HepG2 (cell line): ENCODE measurements at regions of chr22 and their contacts with region 1.

Region 1: DNA sequence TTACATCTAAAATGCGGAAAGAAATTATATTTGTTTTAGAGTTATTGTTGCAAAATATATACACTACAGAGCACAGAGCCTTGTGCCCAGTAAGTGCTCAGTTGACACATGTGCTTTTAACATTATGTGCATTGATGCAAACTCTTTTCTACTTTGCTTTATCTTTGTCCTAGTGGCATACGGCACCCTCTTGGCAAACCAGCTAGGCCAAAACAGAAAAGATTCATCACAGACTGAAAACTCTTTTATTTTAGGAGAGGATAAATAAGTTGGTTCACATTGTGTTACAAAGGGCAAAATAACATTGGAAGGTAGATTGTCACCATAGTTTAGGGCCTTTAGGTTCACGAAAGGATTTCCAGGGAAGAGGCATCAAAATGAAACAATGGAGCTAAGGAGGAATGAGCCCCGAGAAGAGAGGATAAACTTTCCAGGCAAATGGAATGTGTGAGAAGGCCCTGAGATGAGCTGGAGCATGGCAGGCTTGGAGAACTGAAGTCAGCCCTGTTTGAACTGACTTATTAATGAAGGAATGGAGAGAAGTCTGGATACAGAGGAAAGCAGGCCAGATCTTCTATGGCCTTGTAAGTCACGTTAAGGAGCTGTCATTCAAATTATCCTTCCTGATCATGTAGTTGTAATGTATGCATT is 23.5 kb upstream of the TOP3B start:
- DNase-seq: no peak
- ATAC-seq: no peak
- H3K4me3 ChIP-seq: no peak overlapping the region
- H3K27ac ChIP-seq: no peak overlapping the region
- H3K4me1 ChIP-seq: peaks cover 6% of the 10 kb centered on the region; the same call in 1 of the 2 replicates
- H3K27me3 ChIP-seq: peaks cover 0 to 14% of the 10 kb centered on the region in 2 experiments; a peak in 2 of 5 replicates
- CTCF ChIP-seq: no peak
- EP300 ChIP-seq: no peak
- POLR2A ChIP-seq: no peak
- RAD21 ChIP-seq: no peak

Region 2: DNA sequence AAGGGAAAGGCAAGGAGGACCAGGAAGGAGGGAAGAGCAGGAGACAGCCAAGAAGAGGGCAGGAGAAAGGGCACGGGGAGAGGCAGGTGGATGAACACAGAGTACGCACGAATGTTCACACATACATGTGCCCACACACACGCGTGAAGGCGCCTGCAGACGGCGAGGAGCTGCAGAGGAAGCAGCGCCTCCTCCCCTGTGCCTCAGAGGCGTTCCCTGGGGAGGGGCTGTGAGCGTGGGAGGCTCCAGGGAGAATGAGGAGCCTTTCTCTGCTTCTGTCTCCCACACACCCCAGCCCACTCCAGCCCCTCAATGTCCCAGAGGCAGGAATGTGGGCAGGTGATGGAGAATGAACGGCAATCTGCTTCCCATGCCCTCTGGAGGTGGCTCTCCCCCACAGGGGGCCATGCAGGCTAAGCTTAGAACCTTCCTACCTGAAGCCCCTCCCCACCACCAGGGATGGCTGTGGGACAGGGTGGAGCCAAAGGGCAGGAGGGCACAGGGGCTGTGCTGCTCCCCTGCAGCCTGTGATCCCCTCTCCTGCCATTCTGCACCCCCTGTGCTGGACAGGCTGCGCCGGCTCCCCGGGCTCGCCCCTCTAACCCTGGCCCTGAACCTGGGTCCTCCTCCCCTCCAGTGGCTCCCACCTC is 78.8 kb before region 1 on chr22:
- CTCF ChIA-PET with region 1: no interaction called
- POLR2A ChIA-PET with region 1: no interaction called
- in situ Hi-C with region 1: no loop called
- intact Hi-C with region 1: no loop called
- DNase-seq: no peak
- ATAC-seq: no peak
- H3K4me3 ChIP-seq: no peak overlapping the region
- H3K27ac ChIP-seq: no peak overlapping the region
- H3K4me1 ChIP-seq: no peaks in the 10 kb centered on the region
- H3K27me3 ChIP-seq: no peaks in the 10 kb centered on the region
- CTCF ChIP-seq: no peak
- EP300 ChIP-seq: no peak
- POLR2A ChIP-seq: no peak
- RAD21 ChIP-seq: no peak

Region 3: DNA sequence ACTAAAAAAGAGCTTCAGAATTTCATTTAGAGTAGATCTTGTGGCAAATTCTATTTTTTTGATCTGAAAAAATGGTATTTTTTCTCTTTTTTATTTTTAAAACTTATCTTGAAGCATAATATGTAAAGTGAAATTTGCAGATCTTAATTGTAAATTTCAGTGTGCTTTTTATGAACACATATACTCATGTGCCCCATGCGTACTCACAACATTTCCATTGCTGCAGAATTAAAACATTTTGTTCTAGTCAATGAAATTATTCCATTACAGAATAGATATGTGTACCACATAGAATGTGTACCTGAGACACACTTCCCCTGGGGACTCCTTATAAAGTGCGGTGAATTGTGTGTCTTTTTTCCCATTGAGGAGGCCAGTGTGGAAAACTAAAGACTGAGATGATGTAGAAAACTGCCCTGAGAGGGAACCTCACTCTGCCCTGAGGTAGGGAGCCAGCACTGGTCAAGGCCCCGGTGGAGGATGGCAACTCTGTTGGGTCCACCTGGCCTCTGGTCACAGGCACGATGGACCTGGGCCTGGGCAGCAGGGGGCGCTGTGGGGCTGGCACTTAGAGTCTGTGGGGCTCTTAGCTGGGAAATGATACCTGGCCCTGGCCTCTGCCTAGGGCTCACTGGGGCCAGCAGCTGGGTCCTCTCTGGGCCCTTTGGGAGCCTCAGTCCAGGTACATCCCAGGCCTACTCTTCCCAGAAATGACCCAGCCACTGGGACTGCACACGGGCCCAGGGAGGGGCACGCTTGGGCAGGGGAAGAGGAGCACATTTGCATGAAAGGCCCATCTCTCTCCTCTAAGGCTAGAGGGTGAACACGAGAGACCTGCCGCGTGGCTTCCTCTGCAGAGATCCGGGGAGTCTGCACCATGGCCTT is 54.4 kb after region 1 on chr22:
- CTCF ChIA-PET with region 1: no interaction called
- POLR2A ChIA-PET with region 1: no interaction called
- in situ Hi-C with region 1: no loop called
- intact Hi-C with region 1: loop called (anchors 2 kb)
- DNase-seq: peak; percentile 40
- ATAC-seq: peak; percentile 93
- H3K4me3 ChIP-seq: peak overlapping the region in 1 of 3 experiments; percentile 65; a peak in 2 of 6 replicates
- H3K27ac ChIP-seq: peak overlapping the region; percentile 48
- H3K4me1 ChIP-seq: peaks cover 65% of the 10 kb centered on the region
- H3K27me3 ChIP-seq: peaks cover 0 to 9% of the 10 kb centered on the region in 2 experiments; a peak in 1 of 5 replicates
- CTCF ChIP-seq: peak; percentile 94
- EP300 ChIP-seq: no peak
- POLR2A ChIP-seq: no peak
- RAD21 ChIP-seq: peak; percentile 79

Region 4: DNA sequence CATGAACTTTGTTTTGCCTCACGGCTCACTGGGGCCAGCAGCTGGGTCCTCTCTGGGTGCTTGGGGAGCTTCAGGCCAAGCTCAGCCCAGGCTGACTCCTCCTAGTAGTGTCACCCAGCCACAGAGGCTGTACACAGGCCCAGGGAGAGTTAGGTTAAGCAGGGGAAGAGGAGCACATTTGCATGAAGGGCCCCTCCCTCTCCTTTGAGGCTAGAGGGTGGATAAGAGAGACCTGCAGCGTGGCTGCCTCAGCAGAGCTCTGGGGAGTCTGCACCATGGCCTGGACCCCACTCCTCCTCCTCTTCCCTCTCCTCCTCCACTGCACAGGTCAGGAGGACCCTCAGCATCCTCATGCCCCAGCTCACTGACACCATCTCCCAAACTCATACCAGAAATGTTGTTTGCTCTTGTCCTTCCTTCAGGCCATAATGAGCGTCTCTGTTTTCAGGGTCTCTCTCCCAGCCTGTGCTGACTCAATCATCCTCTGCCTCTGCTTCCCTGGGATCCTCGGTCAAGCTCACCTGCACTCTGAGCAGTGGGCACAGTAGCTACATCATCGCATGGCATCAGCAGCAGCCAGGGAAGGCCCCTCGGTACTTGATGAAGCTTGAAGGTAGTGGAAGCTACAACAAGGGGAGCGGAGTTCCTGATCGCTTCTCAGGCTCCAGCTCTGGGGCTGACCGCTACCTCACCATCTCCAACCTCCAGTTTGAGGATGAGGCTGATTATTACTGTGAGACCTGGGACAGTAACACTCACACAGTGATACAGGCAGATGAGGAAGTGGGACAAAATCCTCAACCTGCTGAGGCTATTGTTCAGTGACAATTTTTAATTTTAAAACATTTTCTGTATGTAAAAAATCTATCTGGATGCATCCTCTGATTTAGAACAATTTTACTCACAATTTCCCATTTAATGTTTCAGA is 156.1 kb after region 1 on chr22:
- CTCF ChIA-PET with region 1: no interaction called
- POLR2A ChIA-PET with region 1: no interaction called
- in situ Hi-C with region 1: no loop called
- intact Hi-C with region 1: no loop called
- DNase-seq: no peak
- ATAC-seq: no peak
- H3K4me3 ChIP-seq: no peak overlapping the region
- H3K27ac ChIP-seq: no peak overlapping the region
- H3K4me1 ChIP-seq: peaks cover 3% of the 10 kb centered on the region
- H3K27me3 ChIP-seq: peaks cover 0 to 18% of the 10 kb centered on the region in 2 experiments; a peak in 1 of 5 replicates
- CTCF ChIP-seq: no peak
- EP300 ChIP-seq: no peak
- POLR2A ChIP-seq: no peak
- RAD21 ChIP-seq: no peak